Vagina (tissue), 2 donors: ENCODE measurements at regions of chr6 and their contacts with region 1.

Region 1: DNA sequence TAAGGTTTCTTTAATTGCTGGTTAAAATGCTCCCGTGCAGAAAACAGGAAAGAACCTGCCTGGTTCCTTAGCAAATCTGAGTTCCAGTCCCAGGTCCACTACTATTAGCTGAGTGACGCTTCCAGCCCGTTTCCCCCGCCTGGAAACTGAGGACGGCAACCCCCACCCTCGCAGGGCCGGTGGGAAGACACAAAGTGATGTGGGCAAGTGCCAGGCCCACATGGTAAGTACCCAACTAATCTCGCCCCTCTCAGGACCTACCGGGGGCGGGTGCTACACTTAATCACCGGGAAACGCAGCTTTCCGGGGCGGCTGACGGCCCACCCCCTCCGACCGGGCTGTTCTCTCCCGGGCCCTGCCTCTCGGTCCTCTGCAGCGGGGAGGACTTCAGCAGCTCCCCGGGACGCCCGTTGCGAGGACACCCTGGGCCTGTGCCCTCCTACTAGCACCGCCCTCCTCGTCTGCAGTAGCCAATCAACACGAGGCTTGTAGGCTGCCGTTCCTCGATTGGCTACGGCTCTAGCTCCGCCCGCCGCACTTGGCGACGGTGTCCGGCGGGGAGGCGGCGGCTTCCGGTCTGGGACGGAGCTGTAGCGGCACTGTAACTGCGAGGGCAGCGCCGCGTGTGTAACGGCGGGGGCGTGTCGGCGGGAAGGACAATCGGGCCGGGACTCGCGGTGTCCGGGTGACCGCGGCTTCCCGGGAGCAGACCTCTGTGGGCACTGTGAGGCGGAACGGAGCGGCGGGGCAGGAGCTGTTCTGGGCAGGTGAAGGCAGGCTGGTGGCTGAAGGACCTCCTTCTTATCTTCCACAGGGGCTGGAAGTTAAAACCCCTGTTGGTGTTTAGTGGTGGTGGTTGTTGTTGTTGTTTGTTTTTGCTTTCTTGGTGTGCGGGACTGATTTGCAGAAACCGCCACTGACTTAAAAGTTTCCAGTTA is at the start of gene ZBTB9:
- DNase-seq: peak in 1 of 2 donors; percentile 98
- H3K4me3 ChIP-seq: peak within 1 kb of the TSS; percentile 78
- H3K27ac ChIP-seq: peak within 1 kb of the TSS; percentile 66
- H3K4me1 ChIP-seq: peaks cover 31% of the 10 kb centered on the region
- H3K27me3 ChIP-seq: no peaks in the 10 kb centered on the region
- CTCF ChIP-seq: peak in 1 of 3 experiments; percentile 5
- POLR2A ChIP-seq: peak in 1 of 2 donors; percentile 65
- total RNA-seq, gene ZBTB9: 1.5 TPM

Region 2: DNA sequence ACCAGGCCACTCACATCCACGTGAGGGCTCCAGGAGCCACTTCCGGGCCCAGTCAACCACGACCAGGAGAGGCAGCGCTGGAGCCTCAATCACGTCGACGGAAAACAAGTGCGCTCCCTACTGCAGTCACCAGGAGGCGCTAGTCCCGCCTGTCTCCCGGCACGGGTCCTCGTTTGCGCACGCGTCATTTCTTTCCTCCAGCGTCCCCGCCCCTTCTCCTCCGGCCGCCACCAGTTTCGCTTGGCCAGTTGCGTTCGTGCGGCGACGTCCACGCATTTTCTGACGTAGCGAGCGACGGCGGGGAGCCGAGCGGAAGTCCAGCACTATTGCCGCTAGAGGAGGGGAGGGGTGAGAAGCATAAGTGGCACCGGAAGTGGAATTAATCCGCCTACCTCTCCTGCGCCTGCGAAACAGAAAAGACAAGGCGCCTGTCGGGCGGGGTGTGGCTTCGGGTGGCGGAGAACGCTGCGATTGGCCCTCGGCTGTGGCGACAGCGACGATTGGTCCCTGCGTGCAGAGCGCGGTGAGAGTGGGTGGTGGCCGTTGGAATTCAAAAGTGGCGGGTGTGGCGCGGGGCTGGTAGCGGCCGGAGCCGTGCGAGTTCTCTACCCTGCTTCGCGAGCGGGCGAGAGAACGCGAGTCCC is 62.9 kb before region 1 on chr6 and contains the start of gene KIFC1:
- intact Hi-C with region 1: loop called (anchors 2 kb)
- DNase-seq: peak; percentile 100
- H3K4me3 ChIP-seq: peak within 1 kb of the TSS; percentile 48 to 53
- H3K27ac ChIP-seq: peak within 1 kb of the TSS; percentile 91
- H3K4me1 ChIP-seq: peaks cover 14% of the 10 kb centered on the region
- H3K27me3 ChIP-seq: no peaks in the 10 kb centered on the region
- CTCF ChIP-seq: peak; percentile 90 to 99 (median 97)
- POLR2A ChIP-seq: no peak
- total RNA-seq, gene KIFC1: 27.5 TPM

Region 3: GRCh38 chr6:33410050-33410710 is 44.1 kb before region 1 on chr6:
- intact Hi-C with region 1: loop called (anchors 2 kb)
- DNase-seq: peak in 1 of 2 donors; percentile 99
- H3K4me3 ChIP-seq: peak overlapping the region; percentile 89 to 93
- H3K27ac ChIP-seq: peak overlapping the region; percentile 100
- H3K4me1 ChIP-seq: peaks cover 30% of the 10 kb centered on the region
- H3K27me3 ChIP-seq: no peaks in the 10 kb centered on the region
- CTCF ChIP-seq: no peak
- POLR2A ChIP-seq: peak in 1 of 2 donors; percentile 69

Region 4: GRCh38 chr6:33424855-33425667 is 29.2 kb before region 1 on chr6:
- intact Hi-C with region 1: no loop called
- DNase-seq: no peak
- H3K4me3 ChIP-seq: peak overlapping the region; percentile 63 to 73
- H3K27ac ChIP-seq: peak overlapping the region; percentile 96
- H3K4me1 ChIP-seq: peaks cover 51% of the 10 kb centered on the region
- H3K27me3 ChIP-seq: no peaks in the 10 kb centered on the region
- CTCF ChIP-seq: no peak
- POLR2A ChIP-seq: peak in 1 of 2 donors; percentile 22